ENCODE measurements at regions of chr10 and their contacts with region 1.

Region 1: DNA sequence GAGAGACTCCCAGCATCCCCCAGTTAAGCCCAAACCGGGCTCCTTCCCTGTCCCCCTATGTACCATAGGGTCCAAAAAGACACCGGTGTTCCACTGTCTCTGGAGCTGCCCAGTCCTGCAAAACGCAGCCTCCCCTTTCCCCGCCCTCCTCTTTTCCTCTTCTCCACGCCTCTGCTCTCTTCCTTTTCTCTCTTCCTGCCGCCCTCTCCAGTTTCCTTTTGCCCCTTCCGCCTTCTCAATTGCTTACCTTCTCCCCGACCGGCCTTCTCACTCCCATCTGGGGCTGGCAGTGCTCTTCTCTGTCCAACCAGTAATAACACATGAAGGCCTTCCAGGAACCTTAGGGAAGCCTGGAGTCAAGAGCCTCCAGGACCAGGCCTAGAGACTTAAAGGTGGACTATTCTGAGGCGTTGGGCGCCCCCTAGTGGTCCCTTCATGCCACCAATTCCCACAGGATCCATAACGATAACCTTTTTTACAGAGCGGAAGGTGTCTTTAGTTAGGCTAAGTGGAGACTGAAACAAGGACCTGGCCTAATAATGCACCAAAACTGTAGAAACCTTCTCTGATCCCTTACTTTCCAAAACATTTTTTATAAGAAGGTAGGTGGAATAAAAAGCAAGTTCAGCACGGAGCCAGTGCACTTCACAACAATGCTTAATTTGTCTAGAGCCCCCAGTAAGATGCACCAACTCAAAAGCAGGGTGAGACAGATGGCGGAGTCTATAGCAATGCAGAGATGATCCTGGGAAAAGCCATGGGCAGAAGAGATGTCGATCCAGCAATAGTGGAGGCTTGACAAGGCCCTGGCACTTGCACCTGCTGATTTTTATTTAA is 27.2 kb upstream of the MSRB2 start:
- DNase-seq: peak; percentile 90
- H3K4me3 ChIP-seq: no peak overlapping the region
- H3K27ac ChIP-seq: peak overlapping the region in 1 of 4 donors; percentile 29
- H3K4me1 ChIP-seq: peaks cover 0 to 36% (median 30%) of the 10 kb centered on the region in 4 donors
- H3K27me3 ChIP-seq: no peaks in the 10 kb centered on the region
- CTCF ChIP-seq: peak; percentile 26 to 82 (median 60)
- EP300 ChIP-seq: no peak
- POLR2A ChIP-seq: no peak

Region 2: DNA sequence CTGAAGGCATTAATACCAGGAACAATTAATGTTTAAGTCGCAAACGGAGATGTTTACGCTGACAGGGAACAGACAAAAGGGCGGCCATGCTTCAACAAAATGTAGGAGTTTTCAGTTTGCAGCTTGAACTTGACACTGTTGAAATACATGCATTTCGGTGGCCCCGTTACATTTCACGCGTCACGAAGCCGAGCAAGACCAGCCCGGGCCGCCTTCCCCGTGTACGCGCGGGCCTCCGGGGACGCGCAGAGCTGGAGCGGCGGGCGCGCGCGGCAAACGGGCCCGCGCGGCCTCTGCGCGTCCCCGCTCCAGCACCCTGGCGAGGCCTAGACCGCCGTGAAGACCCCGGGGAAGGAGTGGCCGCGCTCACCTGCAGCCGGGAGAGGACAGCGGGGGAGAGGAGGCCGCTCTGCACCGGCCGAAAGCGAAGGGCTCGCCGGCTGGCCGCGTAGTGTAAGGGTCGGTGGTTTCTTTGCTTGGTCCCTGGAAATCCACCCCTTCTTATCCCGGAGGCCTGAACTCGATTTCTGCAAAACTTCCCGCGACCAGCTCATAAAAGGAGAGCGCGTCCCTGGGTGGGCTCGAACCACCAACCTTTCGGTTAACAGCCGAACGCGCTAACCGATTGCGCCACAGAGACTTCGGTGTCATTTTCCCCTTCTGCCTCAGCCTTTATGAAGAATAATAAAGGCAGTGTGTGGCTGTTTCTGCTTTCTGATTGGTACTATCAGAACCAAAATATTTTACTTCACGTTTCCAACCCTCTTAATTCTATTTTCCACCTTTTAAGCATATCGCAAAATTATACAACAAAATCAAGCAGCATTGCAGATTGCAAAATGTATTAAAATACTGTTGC is 839.0 kb before region 1 on chr10:
- intact Hi-C with region 1: loop called (anchors 5 kb)
- DNase-seq: peak; percentile 93
- H3K4me3 ChIP-seq: peak overlapping the region; percentile 60 to 79 (median 75)
- H3K27ac ChIP-seq: peak overlapping the region; percentile 93 to 96 (median 96)
- H3K4me1 ChIP-seq: peaks cover 0 to 12% (median 7%) of the 10 kb centered on the region in 4 donors
- H3K27me3 ChIP-seq: no peaks in the 10 kb centered on the region
- CTCF ChIP-seq: no peak
- EP300 ChIP-seq: no peak
- POLR2A ChIP-seq: no peak

Region 3: DNA sequence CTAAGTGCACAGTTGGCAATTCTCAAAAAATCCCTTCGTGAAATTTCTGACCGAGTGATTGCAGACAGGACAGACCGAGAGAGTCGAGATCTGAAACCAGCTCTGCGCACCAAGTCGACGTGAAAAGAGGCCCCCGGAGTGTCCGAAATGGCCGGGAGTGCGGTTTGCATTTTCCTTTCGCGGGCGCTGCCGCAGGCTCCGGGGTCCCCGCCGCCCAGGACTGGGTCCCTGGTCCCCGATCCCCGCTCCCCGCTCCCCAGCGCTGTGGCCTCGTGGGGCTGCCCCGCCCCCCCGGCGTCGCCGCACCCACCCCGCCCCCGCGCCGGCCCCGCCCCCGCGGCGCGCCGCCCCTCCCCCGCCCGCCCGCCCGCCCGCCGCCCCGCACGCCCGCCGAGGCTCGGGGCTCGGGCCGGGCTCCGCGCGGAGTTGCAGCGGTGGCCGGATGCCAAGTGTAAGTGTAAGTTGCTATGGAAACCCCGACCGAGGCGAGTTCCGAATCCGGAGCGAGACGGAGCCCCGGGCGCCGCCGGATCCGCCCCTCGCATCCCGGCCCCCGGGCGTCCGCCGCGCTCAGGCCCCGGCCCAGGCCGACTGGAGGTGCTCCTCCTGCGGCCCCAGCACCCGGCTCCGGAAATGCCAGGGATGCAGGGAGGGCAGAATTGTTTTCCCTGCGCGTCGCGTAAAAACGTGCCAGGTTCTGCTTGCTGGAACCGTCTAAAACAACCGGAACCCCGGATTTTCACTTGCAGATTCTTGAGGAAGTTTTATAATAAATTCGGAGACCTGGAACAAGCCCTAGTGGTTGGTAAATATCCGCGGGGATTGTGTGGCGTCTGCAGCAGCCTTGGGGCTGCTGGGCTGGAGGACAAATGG is 742.6 kb before region 1 on chr10:
- intact Hi-C with region 1: loop called (anchors 5 kb)
- DNase-seq: peak; percentile 87
- H3K4me3 ChIP-seq: peak overlapping the region; percentile 40 to 61 (median 60)
- H3K27ac ChIP-seq: peak overlapping the region; percentile 75 to 83 (median 80)
- H3K4me1 ChIP-seq: peaks cover 0 to 39% (median 35%) of the 10 kb centered on the region in 4 donors
- H3K27me3 ChIP-seq: peaks cover 0 to 19% (median 0%) of the 10 kb centered on the region in 3 donors
- CTCF ChIP-seq: no peak
- EP300 ChIP-seq: no peak
- POLR2A ChIP-seq: no peak

Region 4: GRCh38 chr10:22550732-22551131 is 517.4 kb before region 1 on chr10:
- intact Hi-C with region 1: loop called (anchors 10 kb)
- DNase-seq: no peak
- H3K4me3 ChIP-seq: no peak overlapping the region
- H3K27ac ChIP-seq: no peak overlapping the region
- H3K4me1 ChIP-seq: peaks cover 0 to 14% (median 6%) of the 10 kb centered on the region in 4 donors
- H3K27me3 ChIP-seq: no peaks in the 10 kb centered on the region
- CTCF ChIP-seq: peak in 3 of 4 experiments; percentile 10 to 45 (median 28)
- EP300 ChIP-seq: no peak
- POLR2A ChIP-seq: no peak

Region 5: GRCh38 chr10:22606164-22606614 is 462.0 kb before region 1 on chr10:
- intact Hi-C with region 1: no loop called
- DNase-seq: peak; percentile 73
- H3K4me3 ChIP-seq: no peak overlapping the region
- H3K27ac ChIP-seq: peak overlapping the region in 3 of 4 donors; percentile 5 to 40 (median 20)
- H3K4me1 ChIP-seq: peaks cover 0 to 9% (median 2%) of the 10 kb centered on the region in 4 donors
- H3K27me3 ChIP-seq: no peaks in the 10 kb centered on the region
- CTCF ChIP-seq: no peak
- EP300 ChIP-seq: no peak
- POLR2A ChIP-seq: no peak

Region 6: GRCh38 chr10:22805283-22805682 is 262.9 kb before region 1 on chr10:
- intact Hi-C with region 1: loop called (anchors 10 kb)
- DNase-seq: no peak
- H3K4me3 ChIP-seq: no peak overlapping the region
- H3K27ac ChIP-seq: no peak overlapping the region
- H3K4me1 ChIP-seq: peaks cover 0 to 39% (median 25%) of the 10 kb centered on the region in 4 donors
- H3K27me3 ChIP-seq: no peaks in the 10 kb centered on the region
- CTCF ChIP-seq: no peak
- EP300 ChIP-seq: no peak
- POLR2A ChIP-seq: no peak

Region 7: GRCh38 chr10:22988581-22989360 is 79.4 kb before region 1 on chr10:
- intact Hi-C with region 1: loop called (anchors 5 kb)
- DNase-seq: peak; percentile 73
- H3K4me3 ChIP-seq: no peak overlapping the region
- H3K27ac ChIP-seq: no peak overlapping the region
- H3K4me1 ChIP-seq: peaks cover 0 to 11% (median 4%) of the 10 kb centered on the region in 4 donors
- H3K27me3 ChIP-seq: no peaks in the 10 kb centered on the region
- CTCF ChIP-seq: peak; percentile 78 to 89 (median 85)
- EP300 ChIP-seq: no peak
- POLR2A ChIP-seq: no peak

Region 8: GRCh38 chr10:23001901-23002516 is 66.1 kb before region 1 on chr10:
- intact Hi-C with region 1: no loop called
- DNase-seq: no peak
- H3K4me3 ChIP-seq: no peak overlapping the region
- H3K27ac ChIP-seq: no peak overlapping the region
- H3K4me1 ChIP-seq: no peaks in the 10 kb centered on the region
- H3K27me3 ChIP-seq: no peaks in the 10 kb centered on the region
- CTCF ChIP-seq: no peak
- EP300 ChIP-seq: no peak
- POLR2A ChIP-seq: no peak